Activated T-helper 2 cell treated with anti-CD3 and anti-CD28 coated beads, Interferon-gamma antibody, Interleukin-2, Interleukin-4, amounts not matched to agents 10 μg/mL and 5 μg/mL and 100 μg/mL, durations not matched to agents 14 hours and 24 hours and 36 hours (primary cell): ENCODE measurements at regions of chr2 and their contacts with region 1.

Region 1: DNA sequence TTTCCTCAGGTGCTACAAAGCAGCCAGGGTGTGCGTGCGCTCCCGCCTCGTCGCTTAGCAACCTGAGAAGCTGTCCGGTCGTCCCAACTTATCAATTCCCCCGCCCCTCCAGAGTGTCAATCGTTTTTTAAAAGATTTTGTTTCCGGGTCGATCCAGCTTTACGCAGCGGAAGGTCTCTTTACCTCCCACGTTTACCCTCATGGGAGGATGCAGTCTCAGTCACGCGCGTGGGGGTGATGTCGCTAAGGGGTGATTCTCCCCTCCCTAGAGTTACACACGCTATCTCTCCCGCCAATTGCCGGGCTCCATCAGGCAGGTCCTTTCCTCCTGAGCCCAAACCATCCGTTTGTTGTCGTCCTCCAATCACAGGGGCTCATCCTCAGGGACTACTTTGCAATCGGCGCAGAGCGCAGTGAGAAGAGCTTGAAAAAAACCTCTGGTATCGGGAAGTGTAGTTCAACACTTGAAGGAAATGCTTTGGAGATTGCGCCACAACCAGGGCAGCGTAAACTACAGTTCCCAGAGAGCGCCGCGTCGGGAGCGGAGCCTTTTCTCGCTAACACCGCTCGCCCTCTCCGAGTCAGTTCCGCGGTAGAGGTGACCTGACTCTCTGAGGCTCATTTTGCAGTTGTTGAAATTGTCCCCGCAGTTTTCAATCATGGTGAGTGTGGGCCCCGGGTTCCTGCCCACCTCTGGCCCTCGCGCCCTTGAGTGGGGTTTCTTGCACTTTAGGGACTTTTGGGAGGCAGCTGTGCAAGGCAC is at the starts of genes MDH1 and WDPCP:
- DNase-seq: peak; percentile 92
- H3K4me3 Mint-ChIP-seq: peak within 1 kb of the TSS; percentile 99
- H3K27ac Mint-ChIP-seq: peak within 1 kb of the TSS; percentile 91
- H3K4me1 Mint-ChIP-seq: peaks cover 32% of the 10 kb centered on the region
- H3K27me3 Mint-ChIP-seq: no peaks in the 10 kb centered on the region
- total RNA-seq, gene MDH1: 212 and 226 TPM in 2 replicates
- total RNA-seq, gene WDPCP: 5.5 and 6.1 TPM in 2 replicates

Region 2: GRCh38 chr2:62195421-62196277 is 1392.9 kb before region 1 on chr2 and contains the start of gene B3GNT2:
- intact Hi-C with region 1: loop called (anchors 2 kb)
- DNase-seq: peak; percentile 74
- H3K4me3 Mint-ChIP-seq: peak within 1 kb of the TSS; percentile 90
- H3K27ac Mint-ChIP-seq: peak within 1 kb of the TSS; percentile 91
- H3K4me1 Mint-ChIP-seq: peaks cover 32% of the 10 kb centered on the region
- H3K27me3 Mint-ChIP-seq: peaks cover 11% of the 10 kb centered on the region
- total RNA-seq, gene B3GNT2: 29.0 and 29.3 TPM in 2 replicates

Region 3: GRCh38 chr2:62456721-62457539 is 1131.6 kb before region 1 on chr2:
- intact Hi-C with region 1: loop called (anchors 5 kb)
- DNase-seq: peak; percentile 41
- H3K4me3 Mint-ChIP-seq: no peak overlapping the region
- H3K27ac Mint-ChIP-seq: no peak overlapping the region
- H3K4me1 Mint-ChIP-seq: peaks cover 4% of the 10 kb centered on the region
- H3K27me3 Mint-ChIP-seq: peaks cover 7% of the 10 kb centered on the region

Region 4: DNA sequence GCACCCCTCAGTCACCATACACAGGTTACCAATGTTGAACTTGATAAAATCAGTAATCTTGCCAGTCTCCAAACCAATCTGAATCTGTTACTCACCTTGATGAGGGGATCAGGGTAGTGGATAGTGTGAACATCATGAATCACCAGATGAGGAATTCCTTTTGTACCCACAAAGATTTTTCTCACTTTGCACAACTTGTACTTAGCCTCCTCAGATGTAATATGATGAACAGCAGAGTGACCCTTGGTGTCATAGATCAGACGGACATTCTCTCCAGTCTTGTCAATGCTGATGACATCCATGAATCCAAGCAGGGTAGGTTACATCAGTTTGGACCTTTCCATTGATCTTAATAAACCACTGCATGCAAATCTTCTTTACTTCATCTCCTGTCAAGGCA is 54.9 kb after region 1 on chr2:
- intact Hi-C with region 1: no loop called
- DNase-seq: no peak
- H3K4me3 Mint-ChIP-seq: no peak overlapping the region
- H3K27ac Mint-ChIP-seq: no peak overlapping the region
- H3K4me1 Mint-ChIP-seq: no peaks in the 10 kb centered on the region
- H3K27me3 Mint-ChIP-seq: peaks cover 20% of the 10 kb centered on the region

Region 5: DNA sequence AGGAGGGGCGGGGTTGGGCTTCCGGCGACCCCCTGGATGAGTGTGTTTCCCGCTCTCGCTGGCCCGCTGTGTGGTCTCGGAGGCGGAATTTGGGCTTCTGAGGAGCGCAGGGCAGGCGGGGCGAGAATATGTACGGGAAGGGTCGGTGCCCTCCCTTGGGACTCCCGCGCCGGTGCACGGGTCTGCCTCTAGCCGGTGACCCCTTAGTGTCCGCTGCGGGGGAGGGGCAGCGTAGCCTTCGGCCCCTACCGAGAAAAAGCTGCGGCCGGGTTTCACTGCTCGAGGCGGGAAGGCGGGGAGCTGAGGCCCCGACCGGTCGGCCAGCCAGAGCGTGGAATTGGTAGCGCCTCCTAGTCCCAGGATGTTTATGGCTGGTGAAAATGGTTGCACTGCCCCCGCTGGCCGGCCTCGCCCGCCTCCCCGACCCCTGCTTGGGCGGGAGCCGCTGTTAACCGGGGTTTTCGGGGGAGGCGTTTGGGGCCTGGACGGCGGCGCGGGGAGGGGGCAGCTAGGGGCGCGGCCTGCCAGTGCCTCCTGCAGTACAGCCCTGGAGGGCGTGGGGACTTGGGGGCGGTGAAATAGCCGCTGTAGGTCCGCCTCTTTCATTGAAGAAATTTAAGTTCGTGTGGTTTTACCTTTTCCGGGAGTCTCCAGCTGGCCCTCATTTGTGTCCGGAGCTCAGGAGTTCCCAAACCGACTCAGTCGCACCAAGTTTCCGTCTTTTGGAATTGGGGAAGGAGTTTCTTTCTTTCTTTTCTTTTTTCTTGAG is 252.9 kb after region 1 on chr2 and contains the start of gene UGP2:
- intact Hi-C with region 1: loop called (anchors 1 kb)
- DNase-seq: peak; percentile 88
- H3K4me3 Mint-ChIP-seq: peak within 1 kb of the TSS; percentile 92
- H3K27ac Mint-ChIP-seq: peak within 1 kb of the TSS; percentile 95
- H3K4me1 Mint-ChIP-seq: peaks cover 48% of the 10 kb centered on the region
- H3K27me3 Mint-ChIP-seq: peaks cover 2% of the 10 kb centered on the region
- total RNA-seq, gene UGP2: 90.8 and 91.2 TPM in 2 replicates

Region 6: GRCh38 chr2:63962186-63962585 is 373.6 kb after region 1 on chr2:
- intact Hi-C with region 1: no loop called
- DNase-seq: no peak
- H3K4me3 Mint-ChIP-seq: no peak overlapping the region
- H3K27ac Mint-ChIP-seq: no peak overlapping the region
- H3K4me1 Mint-ChIP-seq: no peaks in the 10 kb centered on the region
- H3K27me3 Mint-ChIP-seq: no peaks in the 10 kb centered on the region